Panc1 (cell line): ENCODE measurements at regions of chr14 and their contacts with region 1.

Region 1: GRCh38 chr14:49461529-49462401 is 124.4 kb downstream of the RPS29 start:
- DNase-seq: peak; percentile 20
- ATAC-seq: peak; percentile 88
- H3K4me3 ChIP-seq: no peak overlapping the region
- H3K27ac ChIP-seq: no peak overlapping the region
- H3K4me1 ChIP-seq: no peaks in the 10 kb centered on the region
- H3K27me3 ChIP-seq: peaks cover 2% of the 10 kb centered on the region; the same call in 1 of the 2 replicates
- CTCF ChIP-seq: peak; percentile 66; the same call in 1 of the 2 replicates

Region 2: DNA sequence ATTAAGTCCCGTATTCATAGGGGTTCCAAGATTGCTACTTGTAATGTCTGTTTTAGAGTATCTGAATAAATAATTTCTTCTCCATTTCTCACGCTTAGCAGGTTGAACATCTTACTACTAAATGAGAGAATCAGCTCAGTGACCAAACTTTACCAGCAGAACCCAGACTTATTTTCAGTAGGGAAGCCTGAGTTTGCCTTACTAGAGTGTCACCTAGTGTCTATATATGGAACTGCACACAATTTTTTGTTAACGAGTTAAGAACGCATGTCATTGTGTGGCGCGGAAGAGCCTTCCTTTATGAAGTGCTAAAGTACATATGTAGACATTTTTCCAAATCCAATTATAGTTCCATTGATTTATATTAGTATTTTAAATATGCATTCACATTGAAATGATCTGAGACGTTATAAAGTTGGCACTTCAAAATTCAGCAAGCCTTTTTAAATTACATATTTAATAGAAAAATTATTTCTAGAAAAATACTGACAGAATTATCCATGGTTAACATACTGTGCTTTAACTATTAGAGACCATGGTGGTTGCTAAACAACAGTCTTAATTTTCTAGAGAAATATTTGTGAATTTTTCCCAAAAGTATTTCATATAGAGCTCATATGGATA is 36.1 kb after region 1 on chr14:
- CTCF ChIA-PET with region 1: interaction called, 9 read pairs
- POLR2A ChIA-PET with region 1: no interaction called
- in situ Hi-C with region 1: no loop called
- intact Hi-C with region 1: loop called (anchors 2 kb)
- DNase-seq: peak; percentile 62
- ATAC-seq: peak; percentile 71; the same call in 1 of the 2 replicates
- H3K4me3 ChIP-seq: no peak overlapping the region
- H3K27ac ChIP-seq: no peak overlapping the region
- H3K4me1 ChIP-seq: no peaks in the 10 kb centered on the region
- H3K27me3 ChIP-seq: no peaks in the 10 kb centered on the region
- CTCF ChIP-seq: peak; percentile 75; the same call in 1 of the 2 replicates